ENCODE measurements at regions of chrX and their contacts with region 1.

Region 1: GRCh38 chrX:33336783-33337182 is 125.4 kb upstream of the DMD start:
- DNase-seq: peak in 1 of 2 donors; percentile 19
- H3K4me3 ChIP-seq: no peak overlapping the region
- H3K27ac ChIP-seq: no peak overlapping the region
- H3K4me1 ChIP-seq: peaks cover 0 to 3% (median 0%) of the 10 kb centered on the region in 4 donors
- H3K27me3 ChIP-seq: no peaks in the 10 kb centered on the region
- CTCF ChIP-seq: peak; percentile 42 to 52

Region 2: DNA sequence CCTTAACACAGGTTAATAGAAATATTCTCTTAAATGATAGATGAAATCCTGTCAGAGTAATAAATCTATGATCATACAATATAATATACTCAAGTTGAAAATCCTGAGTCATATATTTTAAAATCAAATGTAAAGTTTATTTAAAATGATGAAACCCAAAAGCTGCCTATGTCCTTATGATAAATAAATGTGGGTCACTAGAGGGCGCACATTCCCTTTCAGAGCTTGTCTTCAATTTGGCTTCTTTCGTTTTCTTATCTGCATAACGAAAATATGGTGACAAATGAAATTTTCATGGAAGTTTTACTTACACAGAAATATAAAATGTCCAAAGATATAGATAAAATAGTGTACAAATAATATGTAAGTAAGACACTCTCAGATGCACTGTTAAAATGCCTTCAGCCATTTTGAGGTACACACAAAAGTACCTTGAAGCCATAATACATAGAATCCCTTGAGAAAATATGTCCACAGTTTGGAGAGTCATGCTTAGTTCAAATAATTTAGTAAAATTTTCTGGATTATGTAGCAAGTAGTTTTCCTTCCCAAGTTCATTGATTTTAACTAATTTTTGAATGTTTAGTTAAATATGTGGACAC is 805.9 kb before region 1 on chrX:
- intact Hi-C with region 1: loop called (anchors 10 kb)
- DNase-seq: no peak
- H3K4me3 ChIP-seq: peak overlapping the region in 1 of 2 donors; percentile 28
- H3K27ac ChIP-seq: no peak overlapping the region
- H3K4me1 ChIP-seq: peaks cover 0 to 8% (median 0%) of the 10 kb centered on the region in 4 donors
- H3K27me3 ChIP-seq: no peaks in the 10 kb centered on the region
- CTCF ChIP-seq: peak; percentile 46 to 48

Region 3: GRCh38 chrX:33357606-33358005 is 20.8 kb after region 1 on chrX:
- intact Hi-C with region 1: no loop called
- DNase-seq: no peak
- H3K4me3 ChIP-seq: no peak overlapping the region
- H3K27ac ChIP-seq: no peak overlapping the region
- H3K4me1 ChIP-seq: no peaks in the 10 kb centered on the region
- H3K27me3 ChIP-seq: no peaks in the 10 kb centered on the region
- CTCF ChIP-seq: no peak

Region 4: GRCh38 chrX:33416273-33416805 is 79.6 kb after region 1 on chrX:
- intact Hi-C with region 1: no loop called
- DNase-seq: no peak
- H3K4me3 ChIP-seq: no peak overlapping the region
- H3K27ac ChIP-seq: no peak overlapping the region
- H3K4me1 ChIP-seq: no peaks in the 10 kb centered on the region
- H3K27me3 ChIP-seq: no peaks in the 10 kb centered on the region
- CTCF ChIP-seq: no peak